ENCODE measurements at regions of chr6 and their contacts with region 1.

Region 1: DNA sequence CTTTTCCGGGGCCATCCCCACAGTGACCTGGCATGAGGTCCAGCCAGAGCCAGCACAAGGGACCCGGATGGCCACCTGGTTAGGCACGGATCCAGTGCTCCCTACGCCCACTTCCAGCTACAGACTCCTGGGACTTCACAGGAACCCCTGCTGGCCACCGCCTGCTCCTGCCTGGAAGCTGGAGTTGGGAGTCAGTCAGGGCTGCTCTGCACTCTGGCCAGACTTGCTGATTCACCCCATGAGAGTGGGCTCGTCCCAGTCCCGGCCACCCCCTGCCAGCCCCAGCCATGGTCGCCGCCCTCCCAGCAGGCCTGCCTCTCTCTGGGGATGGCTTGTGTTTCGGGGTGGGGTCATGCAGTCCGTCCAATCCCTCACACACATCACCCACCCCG is 125.8 kb downstream of the DLL1 start:
- DNase-seq: peak; percentile 51
- ATAC-seq: peak; percentile 47 to 77

Region 2: DNA sequence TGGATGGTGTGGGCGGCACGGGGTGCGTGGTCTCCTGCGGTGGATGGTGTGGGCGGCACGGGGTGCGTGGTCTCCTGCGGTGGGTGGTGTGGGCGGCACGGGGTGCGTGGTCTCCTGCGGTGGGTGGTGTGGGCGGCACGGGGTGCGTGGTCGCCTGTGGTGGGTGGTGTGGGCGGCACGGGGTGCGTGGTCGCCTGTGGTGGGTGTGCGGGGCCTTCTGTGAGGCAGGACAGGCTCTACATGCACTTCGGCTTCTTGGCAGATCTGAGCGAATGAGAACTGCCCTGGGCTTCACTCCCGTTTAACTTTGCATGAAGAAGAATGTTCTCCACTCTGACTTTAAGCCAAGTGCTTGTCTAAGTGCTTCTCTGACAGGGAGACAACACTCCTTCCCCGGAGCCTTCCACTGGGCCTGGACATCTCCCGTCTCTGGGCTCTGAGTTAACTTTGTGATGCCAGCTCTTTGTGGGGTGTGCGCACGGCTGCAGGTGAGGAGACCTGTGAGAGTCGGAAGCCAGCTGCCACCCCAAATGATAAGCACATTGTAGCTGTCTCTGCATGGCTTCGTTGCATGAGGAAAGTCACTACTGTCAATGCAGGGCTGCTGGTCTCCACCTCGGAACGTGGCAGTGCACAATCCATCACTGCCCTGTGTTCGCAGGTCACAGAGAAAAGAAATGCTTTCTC is 118.9 kb before region 1 on chr6:
- intact Hi-C with region 1: loop called in 1 of 2 experiments (anchors 2 kb)
- DNase-seq: peak; percentile 14
- ATAC-seq: peak in 1 of 2 donors; percentile 11

Region 3: GRCh38 chr6:170279977-170280688 is 115.1 kb after region 1 on chr6:
- intact Hi-C with region 1: loop called in 1 of 2 experiments (anchors 5 kb)
- DNase-seq: no peak
- ATAC-seq: peak; percentile 64 to 74